PC-3 (cell line): ENCODE measurements at regions of chr12 and their contacts with region 1.

Region 1: DNA sequence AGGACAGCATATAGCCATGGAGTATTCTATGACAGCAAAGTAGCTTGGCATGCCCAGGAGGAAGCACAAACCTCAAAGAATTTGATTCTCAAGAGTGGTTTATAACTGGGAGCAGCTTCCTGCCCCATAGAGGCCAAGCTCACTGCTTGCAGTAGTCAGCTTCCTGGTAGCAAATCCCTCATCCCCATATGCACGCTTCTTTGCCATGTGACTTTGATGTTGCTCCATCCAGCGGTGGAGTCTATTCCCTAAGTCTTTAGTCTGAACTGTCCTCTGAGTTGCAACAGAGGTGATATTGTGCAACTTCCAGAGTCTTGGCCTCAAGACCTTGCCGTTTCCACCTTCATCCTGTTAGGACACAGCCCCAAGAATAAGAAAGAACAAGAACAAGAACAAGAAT is 996.8 kb upstream of the TMEM132C start:
- DNase-seq: peak; percentile 58
- ATAC-seq: no peak
- H3K4me3 ChIP-seq: no peak overlapping the region
- H3K27ac ChIP-seq: no peak overlapping the region
- H3K4me1 ChIP-seq: peaks cover 41% of the 10 kb centered on the region
- H3K27me3 ChIP-seq: no peaks in the 10 kb centered on the region
- CTCF ChIP-seq: no peak

Region 2: GRCh38 chr12:127108360-127109215 is 161.6 kb before region 1 on chr12:
- CTCF ChIA-PET with region 1: no interaction called
- POLR2A ChIA-PET with region 1: no interaction called
- intact Hi-C with region 1: no loop called
- DNase-seq: peak; percentile 87
- ATAC-seq: peak; percentile 87
- H3K4me3 ChIP-seq: no peak overlapping the region
- H3K27ac ChIP-seq: 0 out of 2 replicates have a peak overlapping the region, but pooled peaks have one; percentile 0
- H3K4me1 ChIP-seq: peaks cover 26% of the 10 kb centered on the region
- H3K27me3 ChIP-seq: no peaks in the 10 kb centered on the region
- CTCF ChIP-seq: peak; percentile 94

Region 3: GRCh38 chr12:127125607-127126259 is 144.5 kb before region 1 on chr12:
- CTCF ChIA-PET with region 1: no interaction called
- POLR2A ChIA-PET with region 1: no interaction called
- intact Hi-C with region 1: loop called (anchors 5 kb)
- DNase-seq: peak; percentile 99
- ATAC-seq: peak; percentile 90
- H3K4me3 ChIP-seq: peak overlapping the region; percentile 20; the same call in 1 of the 2 replicates
- H3K27ac ChIP-seq: peak overlapping the region; percentile 93
- H3K4me1 ChIP-seq: peaks cover 37% of the 10 kb centered on the region
- H3K27me3 ChIP-seq: no peaks in the 10 kb centered on the region
- CTCF ChIP-seq: 0 out of 2 replicates have a peak, but pooled peaks have one; percentile 14

Region 4: DNA sequence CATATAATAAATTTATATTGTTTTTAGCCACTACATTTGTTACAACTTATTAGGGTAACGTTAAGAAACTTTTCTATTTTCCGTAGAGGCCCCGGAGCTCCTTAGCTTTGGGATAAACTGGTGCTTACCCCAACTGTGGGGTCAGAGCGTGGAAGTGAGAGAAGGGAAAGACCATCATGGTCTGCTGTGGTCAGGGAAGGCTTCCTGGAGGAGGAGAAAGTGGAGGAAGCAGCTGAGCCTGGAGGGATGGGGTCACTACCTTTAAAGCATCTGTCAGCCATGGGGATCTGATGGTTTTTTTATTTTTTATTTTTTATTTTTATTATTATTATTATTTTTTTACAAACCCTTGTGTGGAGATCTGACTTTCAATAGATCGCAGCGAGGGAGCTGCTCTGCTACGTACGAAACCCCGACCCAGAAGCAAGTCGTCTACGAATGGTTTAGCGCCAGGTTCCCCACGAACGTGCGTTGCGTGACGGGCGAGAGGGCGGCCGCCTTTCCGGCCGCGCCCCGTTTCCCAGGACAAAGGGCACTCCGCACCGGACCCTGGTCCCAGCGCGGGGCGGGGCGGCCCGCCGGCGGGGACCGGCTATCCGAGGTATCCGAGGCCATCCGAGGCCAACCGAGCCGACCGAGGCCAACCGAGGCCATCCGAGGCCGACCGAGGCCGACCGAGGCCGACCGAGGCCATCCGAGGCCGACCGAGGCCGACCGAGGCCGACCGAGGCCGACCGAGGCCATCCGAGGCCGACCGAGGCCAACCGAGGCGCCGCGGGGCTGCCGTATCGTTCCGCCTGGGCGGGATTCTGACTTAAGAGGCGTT is 104.4 kb before region 1 on chr12:
- CTCF ChIA-PET with region 1: no interaction called
- POLR2A ChIA-PET with region 1: no interaction called
- intact Hi-C with region 1: loop called (anchors 2 kb)
- DNase-seq: peak; percentile 82
- ATAC-seq: peak; percentile 91
- H3K4me3 ChIP-seq: peak overlapping the region; percentile 48; the same call in 1 of the 2 replicates
- H3K27ac ChIP-seq: peak overlapping the region; percentile 38
- H3K4me1 ChIP-seq: peaks cover 21% of the 10 kb centered on the region
- H3K27me3 ChIP-seq: no peaks in the 10 kb centered on the region
- CTCF ChIP-seq: no peak

Region 5: DNA sequence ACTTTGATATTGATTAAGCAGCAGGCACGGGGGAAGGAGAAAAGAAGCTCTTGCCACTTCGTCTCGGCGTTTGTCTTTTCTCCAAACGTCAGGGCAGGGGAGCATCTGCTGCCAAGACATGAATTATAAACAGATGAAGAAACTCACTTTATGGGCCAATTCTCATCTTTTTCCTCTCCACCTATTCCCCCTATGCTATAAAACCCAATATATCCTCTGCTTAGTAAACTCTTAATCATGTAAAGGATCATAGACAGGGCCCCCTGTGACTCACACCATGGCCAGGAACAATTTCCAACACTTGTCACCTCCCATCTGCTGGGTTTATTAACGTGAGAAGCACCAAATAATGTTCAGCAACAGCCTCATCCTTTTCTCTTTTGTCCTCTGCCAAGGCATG is 95.3 kb before region 1 on chr12:
- CTCF ChIA-PET with region 1: no interaction called
- POLR2A ChIA-PET with region 1: no interaction called
- intact Hi-C with region 1: loop called (anchors 2 kb)
- DNase-seq: peak; percentile 57
- ATAC-seq: peak; percentile 81
- H3K4me3 ChIP-seq: no peak overlapping the region
- H3K27ac ChIP-seq: peak overlapping the region; percentile 71
- H3K4me1 ChIP-seq: peaks cover 9% of the 10 kb centered on the region
- H3K27me3 ChIP-seq: no peaks in the 10 kb centered on the region
- CTCF ChIP-seq: no peak

Region 6: GRCh38 chr12:127230843-127231260 is 39.3 kb before region 1 on chr12:
- CTCF ChIA-PET with region 1: no interaction called
- POLR2A ChIA-PET with region 1: no interaction called
- intact Hi-C with region 1: loop called (anchors 1 kb)
- DNase-seq: peak; percentile 99
- ATAC-seq: peak; percentile 86
- H3K4me3 ChIP-seq: peak overlapping the region; percentile 11; the same call in 1 of the 2 replicates
- H3K27ac ChIP-seq: peak overlapping the region; percentile 84
- H3K4me1 ChIP-seq: peaks cover 21% of the 10 kb centered on the region
- H3K27me3 ChIP-seq: no peaks in the 10 kb centered on the region
- CTCF ChIP-seq: no peak

Region 7: GRCh38 chr12:127241072-127241817 is 28.9 kb before region 1 on chr12:
- CTCF ChIA-PET with region 1: no interaction called
- POLR2A ChIA-PET with region 1: no interaction called
- intact Hi-C with region 1: no loop called
- DNase-seq: peak; percentile 64
- ATAC-seq: peak; percentile 41; the same call in 1 of the 2 replicates
- H3K4me3 ChIP-seq: no peak overlapping the region
- H3K27ac ChIP-seq: no peak overlapping the region
- H3K4me1 ChIP-seq: peaks cover 38% of the 10 kb centered on the region
- H3K27me3 ChIP-seq: no peaks in the 10 kb centered on the region
- CTCF ChIP-seq: no peak

Region 8: GRCh38 chr12:127284870-127285431 is 14.8 kb after region 1 on chr12:
- CTCF ChIA-PET with region 1: no interaction called
- POLR2A ChIA-PET with region 1: interaction called, 4 read pairs
- intact Hi-C with region 1: loop called (anchors 1 kb)
- DNase-seq: peak; percentile 91
- ATAC-seq: peak; percentile 84
- H3K4me3 ChIP-seq: no peak overlapping the region
- H3K27ac ChIP-seq: peak overlapping the region; percentile 90
- H3K4me1 ChIP-seq: peaks cover 24% of the 10 kb centered on the region
- H3K27me3 ChIP-seq: no peaks in the 10 kb centered on the region
- CTCF ChIP-seq: no peak

Region 9: DNA sequence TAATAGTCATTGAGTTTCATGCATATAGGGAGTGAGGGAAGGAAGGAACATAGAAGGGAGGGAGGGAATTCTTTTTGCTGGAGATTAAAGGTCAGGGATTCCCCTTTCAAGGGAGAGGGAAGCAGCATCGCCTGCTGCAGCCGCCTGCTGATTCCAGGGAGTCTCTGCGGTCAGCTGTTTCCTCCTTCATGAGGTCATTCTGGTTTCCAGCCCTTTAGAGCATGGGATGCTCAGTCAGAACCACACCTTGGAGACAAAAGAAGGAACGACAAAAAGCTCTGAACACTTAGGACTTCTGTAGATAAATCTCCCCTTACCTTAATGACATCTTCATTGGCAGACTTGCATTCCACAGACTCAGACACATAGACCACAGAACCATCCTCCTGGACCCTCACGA is 73.7 kb after region 1 on chr12:
- CTCF ChIA-PET with region 1: no interaction called
- POLR2A ChIA-PET with region 1: no interaction called
- intact Hi-C with region 1: no loop called
- DNase-seq: peak; percentile 27
- ATAC-seq: peak; percentile 71
- H3K4me3 ChIP-seq: no peak overlapping the region
- H3K27ac ChIP-seq: no peak overlapping the region
- H3K4me1 ChIP-seq: peaks cover 9% of the 10 kb centered on the region; the same call in 1 of the 2 replicates
- H3K27me3 ChIP-seq: no peaks in the 10 kb centered on the region
- CTCF ChIP-seq: no peak